GM18951 (cell line): ENCODE measurements at regions of chr1 and their contacts with region 1.

Region 1: DNA sequence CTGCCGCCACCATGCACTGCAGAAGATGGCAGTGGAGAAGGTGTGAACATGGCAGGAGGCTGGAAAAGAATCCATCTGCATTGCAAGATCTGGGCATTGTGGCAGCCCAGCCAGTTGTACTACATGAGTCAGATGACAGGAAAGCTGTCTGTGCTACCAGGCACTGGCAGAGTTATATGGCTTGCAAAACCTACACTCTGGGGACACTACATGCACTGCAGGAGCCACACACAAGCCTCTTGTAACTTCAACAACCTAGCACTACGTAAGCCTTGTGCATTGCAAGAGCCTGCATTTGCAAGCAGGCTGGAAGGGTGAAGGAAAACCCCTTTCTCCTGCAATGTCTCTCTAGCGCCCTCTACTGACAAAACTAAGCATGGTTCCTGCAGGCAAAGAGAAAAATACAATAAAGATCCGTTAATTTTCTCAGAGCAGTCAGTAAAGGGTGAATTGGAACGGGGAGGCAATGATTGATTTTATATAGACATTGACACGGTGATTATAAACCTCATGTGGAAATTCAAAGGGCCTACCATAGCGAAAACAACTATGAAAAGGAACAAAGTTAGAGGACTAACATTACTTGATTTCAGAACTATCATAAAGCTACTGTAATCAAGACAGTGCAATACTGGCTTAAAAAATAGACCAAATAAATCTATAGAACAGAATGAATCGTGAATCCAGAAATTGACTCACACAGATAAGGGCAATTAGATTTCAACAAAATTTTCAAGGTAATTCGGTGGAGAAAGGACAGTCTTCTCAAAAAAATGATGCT is 26.2 kb upstream of the DYNLT5 start:
- POLR2A ChIP-seq: no peak

Region 2: GRCh38 chr1:65958561-65959350 is 767.3 kb before region 1 on chr1:
- in situ Hi-C with region 1: loop called (anchors 25 kb)
- POLR2A ChIP-seq: no peak

Region 3: DNA sequence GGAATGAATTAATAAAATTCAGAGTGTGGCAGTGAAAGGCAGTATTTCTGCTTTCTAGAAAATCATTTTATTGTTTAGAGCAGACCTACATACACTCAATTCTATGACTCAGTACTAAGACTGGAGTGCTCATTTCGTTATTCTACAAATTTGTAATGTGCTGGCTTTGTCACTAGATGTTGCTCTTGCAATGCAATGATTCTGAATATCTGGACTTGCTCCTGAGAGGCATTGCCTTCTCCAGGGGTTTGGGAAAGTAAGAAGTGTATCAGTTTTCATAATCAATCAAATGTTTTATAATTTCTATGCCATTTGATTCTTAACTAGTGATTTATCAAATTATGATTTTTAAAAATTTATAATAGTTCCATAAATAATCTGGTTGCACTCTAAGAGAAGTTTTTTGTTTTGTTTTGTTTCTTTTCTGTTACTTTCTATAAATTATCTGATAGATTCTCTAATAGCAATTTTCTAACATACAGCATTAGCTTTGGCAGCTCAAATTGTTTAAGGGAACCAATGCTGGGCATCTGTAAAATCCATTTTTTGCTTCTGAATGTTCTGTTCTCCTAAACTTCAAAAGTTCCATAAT is 472.6 kb before region 1 on chr1:
- in situ Hi-C with region 1: loop called (anchors 25 kb)
- POLR2A ChIP-seq: no peak

Region 4: DNA sequence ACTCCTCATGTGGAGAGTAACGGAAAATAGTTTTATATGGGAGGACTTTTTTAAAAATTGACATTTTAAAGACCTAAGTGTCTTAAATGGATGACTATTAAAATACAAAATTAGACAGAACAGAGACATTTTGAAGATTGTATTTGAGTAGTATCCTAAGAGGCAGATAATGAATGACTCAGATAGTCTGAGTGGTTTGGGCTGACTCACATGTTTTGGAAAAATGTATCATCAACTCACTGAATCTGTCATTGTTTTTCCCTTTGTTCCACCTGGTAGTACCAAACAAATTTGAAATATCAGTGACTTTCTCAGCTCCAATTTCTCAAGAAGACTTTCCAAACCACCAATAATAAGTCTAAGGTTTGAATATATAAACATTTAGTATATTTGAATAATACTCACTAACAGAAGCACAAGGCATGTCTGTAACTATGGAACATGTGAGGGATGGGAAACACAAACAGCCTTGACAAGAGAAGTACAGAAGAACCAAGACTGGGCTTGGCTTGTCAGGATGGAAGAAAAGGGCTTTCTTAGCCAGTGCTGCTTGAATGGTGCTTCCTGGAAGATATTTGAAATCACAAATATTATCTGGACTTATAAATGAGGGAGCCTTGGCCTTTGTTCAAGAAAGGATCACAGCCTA is 101.5 kb before region 1 on chr1:
- in situ Hi-C with region 1: no loop called
- POLR2A ChIP-seq: no peak